Activated CD4-positive, alpha-beta T cell treated with anti-CD3 and anti-CD28 coated beads for 36 hours (primary cell): ENCODE measurements at regions of chr22 and their contacts with region 1.

Region 1: GRCh38 chr22:35299673-35300497 is at the start of gene TOM1:
- DNase-seq: peak; percentile 97
- ATAC-seq: peak; percentile 97
- H3K4me3 Mint-ChIP-seq: peak within 1 kb of the TSS; percentile 83
- H3K27ac Mint-ChIP-seq: peak within 1 kb of the TSS; percentile 84
- H3K4me1 Mint-ChIP-seq: peaks cover 35% of the 10 kb centered on the region
- H3K27me3 Mint-ChIP-seq: no peaks in the 10 kb centered on the region
- total RNA-seq, gene TOM1: 23.7 to 29.5 TPM

Region 2: GRCh38 chr22:35257321-35258190 is 42.3 kb before region 1 on chr22 and contains the start of gene HMGXB4:
- CTCF ChIA-PET with region 1: no interaction called
- POLR2A ChIA-PET with region 1: interaction called, 8 read pairs
- intact Hi-C with region 1: loop called (anchors 1 kb)
- DNase-seq: peak; percentile 93
- ATAC-seq: peak; percentile 92
- H3K4me3 Mint-ChIP-seq: peak within 1 kb of the TSS; percentile 91
- H3K27ac Mint-ChIP-seq: peak within 1 kb of the TSS; percentile 90
- H3K4me1 Mint-ChIP-seq: peaks cover 26% of the 10 kb centered on the region
- H3K27me3 Mint-ChIP-seq: no peaks in the 10 kb centered on the region
- total RNA-seq, gene HMGXB4: 36.8 to 37.6 TPM

Region 3: DNA sequence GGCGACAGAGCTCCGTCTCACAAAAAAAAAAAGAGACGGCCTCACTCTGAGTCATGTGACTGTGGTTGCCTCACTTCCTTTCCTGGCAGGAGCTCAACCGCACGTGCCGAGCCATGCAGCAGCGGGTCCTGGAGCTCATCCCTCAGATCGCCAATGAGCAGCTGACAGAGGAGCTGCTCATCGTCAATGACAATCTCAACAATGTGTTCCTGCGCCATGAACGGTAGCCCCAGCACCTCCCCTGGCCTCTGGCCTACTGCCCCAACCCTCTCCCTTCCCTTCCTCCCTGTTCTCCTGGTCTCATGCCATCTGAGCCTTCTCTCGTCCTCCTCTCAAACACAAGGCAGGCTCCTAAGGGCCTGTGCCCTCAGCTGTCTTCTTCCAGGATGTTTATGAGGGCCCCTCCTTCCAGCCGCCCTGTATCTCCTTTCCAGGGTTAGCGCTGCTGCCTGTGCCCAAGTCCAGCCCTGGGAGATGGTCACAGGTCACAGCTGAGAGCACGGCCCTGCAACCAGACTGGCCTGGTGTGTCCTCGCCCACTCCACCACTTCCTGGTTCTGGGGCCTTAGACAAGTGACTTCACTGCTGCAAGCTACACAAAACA is 30.5 kb after region 1 on chr22:
- CTCF ChIA-PET with region 1: interaction called, 4 read pairs
- POLR2A ChIA-PET with region 1: interaction called, 7 read pairs
- intact Hi-C with region 1: loop called (anchors 1 to 5 kb)
- DNase-seq: peak; percentile 83
- ATAC-seq: peak; percentile 70
- H3K4me3 Mint-ChIP-seq: peak overlapping the region; percentile 78
- H3K27ac Mint-ChIP-seq: peak overlapping the region; percentile 97
- H3K4me1 Mint-ChIP-seq: peaks cover 30% of the 10 kb centered on the region
- H3K27me3 Mint-ChIP-seq: no peaks in the 10 kb centered on the region

Region 4: GRCh38 chr22:35399678-35400334 is 99.9 kb after region 1 on chr22 and contains the start of gene MCM5:
- CTCF ChIA-PET with region 1: interaction called, 3 read pairs
- POLR2A ChIA-PET with region 1: interaction called, 15 read pairs
- intact Hi-C with region 1: loop called in 1 of 2 experiments (anchors 1 kb)
- DNase-seq: peak; percentile 99
- ATAC-seq: peak; percentile 100
- H3K4me3 Mint-ChIP-seq: peak within 1 kb of the TSS; percentile 86
- H3K27ac Mint-ChIP-seq: peak within 1 kb of the TSS; percentile 98
- H3K4me1 Mint-ChIP-seq: peaks cover 19% of the 10 kb centered on the region
- H3K27me3 Mint-ChIP-seq: no peaks in the 10 kb centered on the region
- total RNA-seq, gene MCM5: 291 to 382 TPM

Region 5: DNA sequence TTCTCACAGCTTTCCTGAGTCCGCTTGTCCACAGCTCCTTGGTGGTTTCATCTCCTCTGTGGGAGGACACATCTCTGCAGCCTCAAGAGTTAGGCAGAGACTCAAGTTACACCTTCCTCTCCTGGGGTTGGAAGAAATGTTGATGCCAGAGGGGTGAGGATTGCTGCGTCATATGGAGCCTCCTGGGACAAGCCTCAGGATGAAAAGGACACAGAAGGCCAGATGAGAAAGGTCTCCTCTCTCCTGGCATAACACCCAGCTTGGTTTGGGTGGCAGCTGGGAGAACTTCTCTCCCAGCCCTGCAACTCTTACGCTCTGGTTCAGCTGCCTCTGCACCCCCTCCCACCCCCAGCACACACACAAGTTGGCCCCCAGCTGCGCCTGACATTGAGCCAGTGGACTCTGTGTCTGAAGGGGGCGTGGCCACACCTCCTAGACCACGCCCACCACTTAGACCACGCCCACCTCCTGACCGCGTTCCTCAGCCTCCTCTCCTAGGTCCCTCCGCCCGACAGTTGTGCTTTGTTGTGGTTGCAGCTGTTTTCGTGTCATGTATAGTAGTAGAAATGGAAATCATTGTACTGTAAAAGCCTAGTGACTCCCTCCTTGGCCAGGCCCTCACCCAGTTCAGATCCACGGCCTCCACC is 252.4 kb after region 1 on chr22:
- CTCF ChIA-PET with region 1: interaction called, 3 read pairs
- POLR2A ChIA-PET with region 1: no interaction called
- intact Hi-C with region 1: loop called in 1 of 2 experiments (anchors 5 kb)
- DNase-seq: peak; percentile 92
- ATAC-seq: peak; percentile 98
- H3K4me3 Mint-ChIP-seq: no peak overlapping the region
- H3K27ac Mint-ChIP-seq: peak overlapping the region; percentile 20
- H3K4me1 Mint-ChIP-seq: peaks cover 12% of the 10 kb centered on the region
- H3K27me3 Mint-ChIP-seq: no peaks in the 10 kb centered on the region

Region 6: DNA sequence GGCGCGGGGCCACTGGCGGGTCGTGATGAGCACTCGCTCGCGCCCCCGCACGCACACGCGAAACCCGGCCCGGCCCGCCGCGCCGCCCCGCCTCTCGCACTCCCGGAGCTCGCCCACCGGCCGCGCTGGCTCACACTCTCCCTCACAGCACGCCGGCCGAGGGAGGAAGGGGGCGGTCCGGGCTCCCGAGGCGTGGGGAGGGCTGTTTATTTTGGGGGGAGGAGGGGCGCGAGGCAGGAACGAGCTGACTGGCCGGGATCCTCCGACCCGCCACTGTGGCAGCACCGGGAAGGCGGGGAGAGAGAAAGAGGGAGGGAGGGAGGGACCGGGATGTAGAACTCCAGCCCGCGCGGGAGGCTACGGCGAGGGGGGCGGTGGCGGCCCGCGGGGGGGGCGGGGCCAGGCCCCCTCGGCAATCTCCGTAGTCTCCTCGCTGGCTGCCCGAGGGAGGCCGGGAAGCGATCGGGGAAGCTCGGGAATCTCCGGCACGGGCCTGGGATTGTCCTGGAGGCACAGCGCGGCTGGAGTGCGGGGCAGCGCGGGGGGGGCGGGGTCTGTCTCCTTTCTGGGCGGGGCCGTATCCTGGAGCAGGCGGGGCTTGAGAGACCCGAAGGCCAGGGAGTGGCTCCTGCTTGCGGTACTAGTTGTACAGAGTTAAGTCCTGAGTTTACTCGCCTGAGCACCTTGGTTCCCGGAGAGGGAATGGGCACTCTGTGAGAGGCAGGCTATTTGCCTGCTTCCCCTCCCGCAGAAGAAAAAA is 728.9 kb after region 1 on chr22 and contains the start of gene RBFOX2:
- CTCF ChIA-PET with region 1: no interaction called
- POLR2A ChIA-PET with region 1: no interaction called
- intact Hi-C with region 1: loop called in 1 of 2 experiments (anchors 5 kb)
- DNase-seq: peak; percentile 87
- ATAC-seq: peak; percentile 83
- H3K4me3 Mint-ChIP-seq: peak within 1 kb of the TSS; percentile 80
- H3K27ac Mint-ChIP-seq: peak within 1 kb of the TSS; percentile 72
- H3K4me1 Mint-ChIP-seq: peaks cover 20% of the 10 kb centered on the region
- H3K27me3 Mint-ChIP-seq: peaks cover 2% of the 10 kb centered on the region
- total RNA-seq, gene RBFOX2: 6.9 to 7.7 TPM